ENCODE measurements at regions of chr3 and their contacts with region 1.

Region 1: DNA sequence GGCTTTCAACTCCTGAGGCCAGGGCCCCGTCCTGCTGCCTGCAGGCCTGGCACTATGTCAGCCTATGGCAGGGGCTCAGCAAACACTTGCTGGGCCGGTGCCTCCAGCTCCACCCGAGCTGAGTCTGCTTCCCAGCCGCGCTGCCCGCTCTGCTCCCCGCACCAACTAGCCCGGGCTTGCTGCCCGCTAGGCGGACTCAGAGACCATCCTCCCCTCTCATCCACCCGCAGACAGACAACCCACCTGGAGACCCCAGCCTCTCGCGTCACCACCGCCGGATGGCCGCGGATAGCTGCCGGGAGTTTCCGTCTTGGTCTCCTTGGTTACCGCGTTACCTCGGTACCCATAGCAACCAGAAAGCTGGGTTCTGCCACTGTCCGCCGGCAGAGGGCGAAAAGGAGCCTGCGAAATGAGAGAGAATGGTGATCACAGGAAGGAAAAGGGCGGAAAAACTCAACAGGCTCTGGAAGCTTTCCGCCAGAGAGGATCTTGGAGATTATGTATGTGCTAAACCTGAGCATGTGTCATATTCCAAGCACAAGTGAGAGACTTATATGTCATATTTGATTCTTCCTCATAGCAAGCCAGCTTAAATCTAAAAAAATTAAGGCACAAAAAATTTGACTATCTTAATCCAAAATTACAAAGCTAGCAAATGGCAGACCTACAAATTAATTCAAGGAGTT is at the start of gene ZBBX:
- DNase-seq: peak; percentile 71 to 86
- ATAC-seq: peak; percentile 84 to 99 (median 89)
- H3K4me3 ChIP-seq: peak within 1 kb of the TSS; percentile 53
- H3K27ac ChIP-seq: no peak within 1 kb of the TSS
- H3K4me1 ChIP-seq: no peaks in the 10 kb centered on the region
- H3K27me3 ChIP-seq: no peaks in the 10 kb centered on the region
- CTCF ChIP-seq: peak; percentile 83
- total RNA-seq, gene ZBBX: not detected

Region 2: GRCh38 chr3:167467848-167468611 is 87.9 kb after region 1 on chr3:
- intact Hi-C with region 1: no loop called
- DNase-seq: no peak
- ATAC-seq: no peak
- H3K4me3 ChIP-seq: no peak overlapping the region
- H3K27ac ChIP-seq: no peak overlapping the region
- H3K4me1 ChIP-seq: no peaks in the 10 kb centered on the region
- H3K27me3 ChIP-seq: no peaks in the 10 kb centered on the region
- CTCF ChIP-seq: no peak

Region 3: DNA sequence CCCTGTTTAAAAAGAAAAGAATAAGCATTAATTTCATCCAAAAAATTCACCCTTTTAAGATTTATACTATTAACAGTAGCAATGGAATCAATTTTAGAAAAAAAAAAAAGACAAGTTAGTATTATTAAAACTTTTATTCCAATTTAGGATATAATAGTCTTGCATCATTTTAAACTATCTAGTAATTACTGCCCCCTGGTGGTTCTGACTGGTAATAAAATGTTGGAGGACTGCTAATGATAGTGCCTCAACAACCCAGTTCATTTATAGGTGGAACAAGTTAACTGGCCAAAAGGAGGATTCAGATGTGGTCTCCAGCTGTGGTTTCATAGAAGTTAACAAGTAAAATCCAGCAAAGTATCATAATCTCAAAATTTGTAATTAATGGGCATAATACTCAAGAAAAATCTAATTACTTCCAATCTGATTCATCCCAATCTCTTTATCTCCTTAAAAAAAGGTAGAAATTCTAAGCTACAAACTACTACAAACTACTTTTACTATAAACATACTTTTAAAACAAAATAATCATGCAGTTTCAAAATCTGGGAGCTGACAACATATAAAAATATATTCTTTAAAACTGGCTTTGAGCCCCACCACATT is 304.3 kb after region 1 on chr3:
- intact Hi-C with region 1: loop called (anchors 5 to 10 kb)
- DNase-seq: no peak
- ATAC-seq: peak in 2 of 4 donors; percentile 65 to 82
- H3K4me3 ChIP-seq: no peak overlapping the region
- H3K27ac ChIP-seq: no peak overlapping the region
- H3K4me1 ChIP-seq: no peaks in the 10 kb centered on the region
- H3K27me3 ChIP-seq: no peaks in the 10 kb centered on the region
- CTCF ChIP-seq: peak; percentile 72

Region 4: GRCh38 chr3:167882067-167882667 is 502.0 kb after region 1 on chr3:
- intact Hi-C with region 1: loop called (anchors 5 kb)
- DNase-seq: no peak
- ATAC-seq: no peak
- H3K4me3 ChIP-seq: no peak overlapping the region
- H3K27ac ChIP-seq: no peak overlapping the region
- H3K4me1 ChIP-seq: peaks cover under 1% of the 10 kb centered on the region
- H3K27me3 ChIP-seq: no peaks in the 10 kb centered on the region
- CTCF ChIP-seq: peak; percentile 79

Measured in psoas muscle (tissue), 8 donors.